ENCODE measurements at regions of chr15 and their contacts with region 1.

Region 1: GRCh38 chr15:37100109-37100965 is at the start of gene MEIS2:
- DNase-seq: peak; percentile 95 to 98 (median 97)
- ATAC-seq: peak; percentile 84 to 85
- H3K4me3 ChIP-seq: peak within 1 kb of the TSS; percentile 97
- H3K27ac ChIP-seq: peak within 1 kb of the TSS; percentile 97
- H3K4me1 ChIP-seq: peaks cover 2% of the 10 kb centered on the region
- H3K27me3 ChIP-seq: no peaks in the 10 kb centered on the region
- total RNA-seq, gene MEIS2: 28.9 to 33.4 (median 31.0) TPM

Region 2: GRCh38 chr15:36883713-36884517 is 216.4 kb before region 1 on chr15:
- intact Hi-C with region 1: loop called in 2 of 4 experiments (anchors 5 to 10 kb)
- DNase-seq: peak; percentile 89 to 95 (median 94)
- ATAC-seq: peak; percentile 89 to 92
- H3K4me3 ChIP-seq: peak overlapping the region; percentile 58
- H3K27ac ChIP-seq: no peak overlapping the region
- H3K4me1 ChIP-seq: peaks cover 8% of the 10 kb centered on the region
- H3K27me3 ChIP-seq: no peaks in the 10 kb centered on the region

Region 3: GRCh38 chr15:37015035-37015434 is 85.3 kb before region 1 on chr15:
- intact Hi-C with region 1: loop called in 1 of 4 experiments (anchors 10 kb)
- DNase-seq: peak in 2 of 3 donors; percentile 56 to 61
- ATAC-seq: peak; percentile 72 to 81
- H3K4me3 ChIP-seq: no peak overlapping the region
- H3K27ac ChIP-seq: peak overlapping the region; percentile 21
- H3K4me1 ChIP-seq: no peaks in the 10 kb centered on the region
- H3K27me3 ChIP-seq: no peaks in the 10 kb centered on the region

Region 4: DNA sequence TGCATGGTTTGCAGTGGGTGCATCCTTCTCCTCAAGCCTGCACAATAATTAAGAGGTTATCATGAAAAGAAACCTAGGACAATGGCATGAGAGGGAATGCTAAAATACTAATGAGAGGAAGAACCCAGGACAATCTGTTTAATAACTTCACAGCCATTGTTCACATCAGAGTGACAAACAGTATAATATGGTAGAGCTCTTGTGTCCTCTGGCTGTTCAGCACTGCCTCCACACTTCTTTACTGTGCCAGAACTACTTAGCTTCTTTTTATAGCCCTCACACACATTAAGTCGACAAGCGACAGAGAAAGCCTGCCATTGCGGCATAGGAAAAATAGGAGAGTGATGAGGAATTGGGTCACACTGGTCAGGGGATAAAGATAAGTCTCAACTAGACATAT is 65.1 kb after region 1 on chr15:
- intact Hi-C with region 1: no loop called
- DNase-seq: no peak
- ATAC-seq: peak; percentile 42 to 48
- H3K4me3 ChIP-seq: no peak overlapping the region
- H3K27ac ChIP-seq: no peak overlapping the region
- H3K4me1 ChIP-seq: no peaks in the 10 kb centered on the region
- H3K27me3 ChIP-seq: no peaks in the 10 kb centered on the region

Measured in right cardiac atrium (tissue), 5 donors.